K562 (cell line): ENCODE measurements at regions of chr10 and their contacts with region 1.

Region 1: DNA sequence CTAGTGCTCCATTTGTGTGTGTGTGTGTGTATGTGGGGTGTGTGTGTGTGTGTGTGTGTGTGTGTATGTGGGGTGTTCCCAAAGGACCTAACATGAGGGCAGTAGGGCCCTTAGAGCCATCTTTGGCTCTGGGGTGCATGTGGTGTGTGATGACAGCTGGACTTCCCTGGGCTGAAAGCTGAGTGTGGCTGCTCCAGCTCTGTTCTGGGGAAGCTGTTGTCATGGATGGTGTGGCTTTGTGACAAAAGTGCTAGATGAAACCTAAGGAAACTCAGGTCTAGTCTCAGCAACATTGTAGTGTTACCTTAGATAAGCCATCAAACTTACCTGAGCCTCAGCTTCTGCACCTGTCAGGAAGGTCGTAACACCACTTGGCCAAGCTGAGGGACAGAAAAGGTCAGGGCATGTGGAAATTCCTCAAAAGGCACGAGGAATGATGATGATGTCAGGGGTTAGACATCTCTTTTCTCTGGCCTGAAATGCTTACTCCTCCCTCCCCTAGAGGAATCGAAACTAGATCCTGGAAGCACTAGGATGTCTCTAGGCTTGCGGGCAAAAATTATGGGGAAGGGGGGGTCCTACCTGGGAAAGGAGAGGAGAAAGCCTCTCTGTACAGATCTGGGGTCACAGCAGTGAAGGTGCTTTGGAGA is 115.4 kb downstream of the RPS24 start:
- DNase-seq: no peak
- ATAC-seq: no peak
- H3K4me3 ChIP-seq: no peak overlapping the region
- H3K27ac ChIP-seq: no peak overlapping the region
- H3K4me1 ChIP-seq: no peaks in the 10 kb centered on the region
- H3K27me3 ChIP-seq: no peaks in the 10 kb centered on the region
- CTCF ChIP-seq: no peak
- EP300 ChIP-seq: no peak
- POLR2A ChIP-seq: no peak
- RAD21 ChIP-seq: no peak

Region 2: DNA sequence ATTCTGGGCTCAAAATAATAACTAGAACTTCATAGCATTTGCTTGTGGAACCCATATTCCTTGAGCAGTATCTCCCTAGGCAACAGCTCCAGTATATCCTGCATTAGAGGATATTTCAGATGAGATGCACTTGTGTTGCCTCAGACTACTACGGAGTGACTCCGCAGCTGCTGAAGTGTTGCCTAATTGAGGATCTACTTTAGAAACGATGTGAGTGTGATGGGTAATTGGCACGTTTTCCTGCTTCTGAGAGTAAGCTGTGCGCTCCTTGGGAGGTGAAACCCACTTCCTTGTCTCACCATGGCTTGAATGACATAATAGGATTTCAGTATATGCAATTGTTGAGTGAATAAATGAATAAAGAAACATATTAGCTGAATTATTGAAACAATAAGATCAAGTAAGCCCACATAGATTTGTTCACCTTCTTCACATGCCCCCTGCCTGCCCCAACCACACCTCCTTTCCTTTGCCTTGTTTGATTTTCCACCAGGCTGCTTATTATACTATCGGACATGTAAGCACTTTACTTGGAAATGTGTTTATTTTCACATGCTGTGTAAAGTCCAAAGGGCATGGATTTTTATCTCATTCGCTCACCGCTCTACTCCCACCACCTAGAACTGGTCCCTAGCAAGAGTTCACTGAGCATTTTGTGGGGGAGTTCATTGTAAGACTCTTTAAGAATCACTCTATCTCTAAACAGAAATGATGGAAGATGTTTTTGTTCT is 815.3 kb before region 1 on chr10:
- CTCF ChIA-PET with region 1: no interaction called
- POLR2A ChIA-PET with region 1: no interaction called
- in situ Hi-C with region 1: no loop called
- intact Hi-C with region 1: no loop called
- DNase-seq: no peak
- ATAC-seq: no peak
- H3K4me3 ChIP-seq: no peak overlapping the region
- H3K27ac ChIP-seq: no peak overlapping the region
- H3K4me1 ChIP-seq: no peaks in the 10 kb centered on the region
- H3K27me3 ChIP-seq: no peaks in the 10 kb centered on the region; a peak in 1 of 5 replicates
- CTCF ChIP-seq: no peak
- EP300 ChIP-seq: no peak
- POLR2A ChIP-seq: no peak
- RAD21 ChIP-seq: no peak

Region 3: GRCh38 chr10:78203915-78204818 is 55.1 kb after region 1 on chr10:
- CTCF ChIA-PET with region 1: no interaction called
- POLR2A ChIA-PET with region 1: no interaction called
- in situ Hi-C with region 1: no loop called
- intact Hi-C with region 1: loop called (anchors 10 kb)
- DNase-seq: no peak
- ATAC-seq: no peak
- H3K4me3 ChIP-seq: no peak overlapping the region
- H3K27ac ChIP-seq: no peak overlapping the region
- H3K4me1 ChIP-seq: no peaks in the 10 kb centered on the region
- H3K27me3 ChIP-seq: peaks cover 0 to 35% of the 10 kb centered on the region in 2 experiments; a peak in 2 of 5 replicates
- CTCF ChIP-seq: no peak
- EP300 ChIP-seq: no peak
- POLR2A ChIP-seq: no peak
- RAD21 ChIP-seq: no peak